Mucosa of descending colon (tissue), 3 donors: ENCODE measurements at regions of chr1 and their contacts with region 1.

Region 1: DNA sequence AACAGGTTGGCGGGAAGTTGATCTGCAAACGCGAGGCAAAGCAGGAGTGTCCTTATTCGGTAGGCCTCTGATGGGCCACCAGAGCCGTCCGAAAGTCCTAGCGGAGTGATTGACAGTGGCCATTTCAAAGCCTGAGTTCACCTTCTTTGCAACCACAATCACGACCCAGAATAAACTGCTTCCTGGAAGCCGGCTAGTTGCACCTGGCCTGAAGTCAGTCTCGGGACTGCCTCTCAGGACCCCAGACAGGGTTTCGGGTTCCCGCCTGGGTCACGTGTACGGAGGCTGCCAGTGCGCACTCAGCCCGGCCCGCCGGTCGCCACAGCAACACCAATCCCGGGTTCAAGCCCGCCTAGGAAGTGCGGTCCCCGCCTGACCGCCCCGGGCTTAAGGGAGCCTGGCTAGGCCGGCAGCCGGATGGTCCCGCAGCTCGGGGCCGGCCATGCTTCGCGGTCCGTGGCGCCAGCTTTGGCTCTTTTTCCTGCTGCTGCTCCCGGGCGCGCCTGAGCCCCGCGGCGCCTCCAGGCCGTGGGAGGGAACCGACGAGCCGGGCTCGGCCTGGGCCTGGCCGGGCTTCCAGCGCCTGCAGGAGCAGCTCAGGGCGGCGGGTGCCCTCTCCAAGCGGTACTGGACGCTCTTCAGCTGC is at the start of gene TOR3A:
- DNase-seq: peak; percentile 95 to 97 (median 96)
- ATAC-seq: peak; percentile 94
- H3K4me3 ChIP-seq: peak within 1 kb of the TSS; percentile 78
- H3K4me1 ChIP-seq: peaks cover 20% of the 10 kb centered on the region
- CTCF ChIP-seq: no peak
- total RNA-seq, gene TOR3A: 22.8 to 28.1 (median 25.3) TPM

Region 2: GRCh38 chr1:178857126-178857525 is 224.7 kb before region 1 on chr1:
- intact Hi-C with region 1: no loop called
- DNase-seq: no peak
- ATAC-seq: no peak
- H3K4me3 ChIP-seq: no peak overlapping the region
- H3K4me1 ChIP-seq: no peaks in the 10 kb centered on the region
- CTCF ChIP-seq: no peak

Region 3: DNA sequence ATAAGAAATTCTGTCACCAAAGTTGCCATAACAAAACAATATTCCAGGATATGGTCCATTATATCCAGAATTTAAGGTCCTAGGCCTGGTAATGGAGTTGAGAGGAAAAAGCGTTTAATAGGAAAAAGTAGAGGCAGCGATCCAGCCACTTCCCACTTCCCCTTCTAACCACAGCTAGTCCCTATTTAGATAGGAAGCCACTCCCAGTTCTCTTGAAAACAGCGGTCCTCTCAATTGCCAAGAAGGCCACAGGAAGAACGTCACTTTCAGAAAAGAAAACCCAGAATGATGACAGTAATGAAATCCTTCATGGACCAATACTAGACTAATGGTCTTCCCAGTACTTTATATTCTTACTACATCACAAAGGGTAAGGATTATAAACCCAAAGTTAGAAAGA is 109.1 kb after region 1 on chr1:
- intact Hi-C with region 1: no loop called
- DNase-seq: peak in 1 of 3 donors; percentile 16
- ATAC-seq: no peak
- H3K4me3 ChIP-seq: no peak overlapping the region
- H3K4me1 ChIP-seq: peaks cover 4% of the 10 kb centered on the region
- CTCF ChIP-seq: no peak

Region 4: DNA sequence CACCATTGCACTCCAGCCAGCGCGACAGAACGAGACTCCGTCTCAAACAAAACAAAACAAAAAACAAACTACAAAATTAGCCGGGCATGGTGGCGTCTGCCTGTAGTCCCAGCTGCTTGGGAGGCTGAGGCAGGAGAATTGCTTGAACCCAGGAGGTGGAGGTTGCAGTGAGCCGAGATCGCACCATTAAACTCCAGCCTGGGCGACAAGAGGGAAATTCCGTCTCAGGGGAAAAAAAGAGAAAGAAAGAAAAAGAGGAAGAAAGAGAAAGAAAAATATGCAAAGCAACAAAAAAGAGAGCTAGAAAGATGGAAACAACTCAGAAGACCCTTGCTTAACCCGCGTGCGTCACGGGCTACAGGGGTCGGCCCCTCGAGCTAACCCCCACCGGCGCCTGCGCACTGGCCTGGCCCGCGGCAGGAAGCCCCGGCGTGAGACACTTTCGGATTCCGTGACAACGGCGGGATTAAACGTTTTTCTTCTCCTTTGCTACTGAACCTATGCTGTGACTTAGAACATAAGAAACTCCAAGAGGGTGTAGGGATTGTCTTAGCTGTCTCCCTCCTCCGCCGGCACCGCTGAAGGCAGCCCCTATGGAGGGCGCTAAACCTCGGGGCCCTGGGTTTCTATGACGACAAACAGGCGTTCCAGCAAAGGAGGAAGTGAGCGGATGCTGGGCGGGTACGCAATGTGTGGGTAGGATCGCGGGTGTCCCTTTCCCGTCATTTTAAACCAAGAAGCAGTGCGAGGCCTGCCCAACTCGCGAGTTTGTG is 283.7 kb after region 1 on chr1 and contains the start of gene AXDND1:
- intact Hi-C with region 1: loop called in 1 of 2 experiments (anchors 5 kb)
- DNase-seq: peak; percentile 89 to 94 (median 93)
- ATAC-seq: peak; percentile 98
- H3K4me3 ChIP-seq: peak within 1 kb of the TSS; percentile 52
- H3K4me1 ChIP-seq: no peaks in the 10 kb centered on the region
- CTCF ChIP-seq: no peak
- total RNA-seq, gene AXDND1: 5.6 to 21.1 (median 10.2) TPM